Aorta (tissue), 5 donors: ENCODE measurements at regions of chr3 and their contacts with region 1.

Region 1: DNA sequence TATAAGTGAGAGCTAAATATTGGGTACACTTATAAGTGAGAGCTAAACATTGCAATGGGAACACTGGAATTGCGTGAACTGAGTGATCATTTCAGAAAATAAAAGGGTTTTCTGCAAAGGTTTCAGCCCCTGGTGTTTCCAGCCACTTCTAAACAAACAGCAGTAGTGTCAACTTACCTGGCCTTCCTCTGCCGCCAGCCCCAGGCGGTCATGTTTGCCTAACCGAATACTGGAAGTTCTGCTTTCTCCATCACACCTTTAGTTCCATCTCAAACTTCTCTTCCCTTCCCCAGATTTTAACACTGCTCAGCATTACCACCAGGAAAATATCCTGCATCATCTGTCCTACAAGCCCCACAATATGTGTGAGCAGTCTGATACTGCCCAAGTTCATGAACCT is 58.6 kb downstream of the MRPL3 start:
- DNase-seq: no peak
- ATAC-seq: no peak
- H3K4me3 ChIP-seq: no peak overlapping the region
- H3K27ac ChIP-seq: no peak overlapping the region
- H3K4me1 ChIP-seq: no peaks in the 10 kb centered on the region
- H3K27me3 ChIP-seq: no peaks in the 10 kb centered on the region

Region 2: DNA sequence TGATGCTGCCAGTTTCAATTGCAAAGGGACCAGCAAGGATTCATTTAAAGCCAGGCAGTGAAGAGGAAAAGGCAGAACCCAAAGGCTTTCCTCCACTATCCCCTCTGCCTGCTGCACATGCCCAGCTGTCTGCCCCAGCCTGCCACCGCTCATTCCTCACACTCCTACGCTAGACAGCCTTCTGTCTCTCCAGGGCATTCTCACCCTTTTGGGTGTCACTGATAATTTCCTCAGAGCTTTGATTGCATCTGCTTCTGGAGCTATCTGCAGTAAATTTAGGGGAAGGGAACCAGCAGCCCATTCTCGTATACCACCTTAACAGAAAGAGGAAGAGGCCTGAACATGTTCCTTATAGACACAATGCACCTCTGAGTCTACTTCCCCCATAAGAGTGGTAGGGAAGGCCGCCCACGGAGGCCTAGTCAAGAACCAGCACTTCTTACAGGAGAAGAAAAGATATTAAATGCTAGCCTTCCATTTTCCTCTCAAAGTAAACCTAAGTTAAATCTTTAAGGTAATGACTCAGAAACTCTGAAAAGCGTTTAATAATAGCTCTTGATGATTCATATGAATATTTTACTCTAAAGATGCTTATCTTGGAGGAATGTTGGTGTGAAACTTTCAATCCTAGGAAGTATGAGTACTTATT is 41.7 kb before region 1 on chr3:
- intact Hi-C with region 1: loop called in 1 of 2 experiments (anchors 2 kb)
- DNase-seq: peak in 1 of 2 donors; percentile 49
- ATAC-seq: no peak
- H3K4me3 ChIP-seq: no peak overlapping the region
- H3K27ac ChIP-seq: peak overlapping the region in 1 of 2 donors; percentile 60
- H3K4me1 ChIP-seq: no peaks in the 10 kb centered on the region
- H3K27me3 ChIP-seq: no peaks in the 10 kb centered on the region

Region 3: DNA sequence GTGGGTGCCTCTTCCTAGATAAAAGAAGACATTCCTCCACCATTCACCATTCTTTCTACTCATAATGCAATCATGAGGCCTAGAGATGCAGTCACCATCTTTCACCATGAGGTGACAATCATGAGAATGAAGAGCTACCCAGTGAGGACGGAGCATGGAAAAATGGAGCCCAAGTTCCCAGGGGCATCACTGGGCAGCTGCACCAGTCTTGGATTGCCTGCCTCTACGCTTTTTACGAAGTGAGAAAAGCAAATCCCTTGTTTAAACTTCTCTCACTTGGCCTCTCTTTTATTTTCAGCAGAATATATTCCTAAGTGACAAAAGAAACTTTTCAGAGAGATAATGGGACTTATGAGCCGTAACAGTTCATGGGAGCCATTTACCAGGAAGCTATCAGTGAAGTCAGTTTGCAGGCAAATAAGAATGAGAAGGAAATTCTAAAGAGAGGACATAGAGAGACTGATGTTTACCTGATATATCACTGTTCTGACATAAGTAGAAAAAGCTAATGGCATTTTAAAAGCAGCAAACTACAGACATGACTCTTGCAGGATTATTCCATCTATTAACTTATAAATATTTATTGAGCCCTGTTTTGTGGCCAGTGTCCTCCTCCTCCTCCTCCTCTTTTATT is 680.6 kb after region 1 on chr3:
- intact Hi-C with region 1: no loop called
- DNase-seq: no peak
- ATAC-seq: no peak
- H3K4me3 ChIP-seq: no peak overlapping the region
- H3K27ac ChIP-seq: no peak overlapping the region
- H3K4me1 ChIP-seq: no peaks in the 10 kb centered on the region
- H3K27me3 ChIP-seq: no peaks in the 10 kb centered on the region